Endothelial cell of umbilical vein (primary cell): ENCODE measurements at regions of chr10 and their contacts with region 1.

Region 1: GRCh38 chr10:97869091-97870042 is 19.7 kb downstream of the GOLGA7B start:
- DNase-seq: peak; percentile 78
- H3K4me3 ChIP-seq: no peak overlapping the region
- H3K27ac ChIP-seq: no peak overlapping the region
- H3K4me1 ChIP-seq: peaks cover 5% of the 10 kb centered on the region
- H3K27me3 ChIP-seq: peaks cover 13 to 15% of the 10 kb centered on the region in 2 experiments
- CTCF ChIP-seq: peak; percentile 73 to 75
- POLR2A ChIP-seq: peak; percentile 38

Region 2: GRCh38 chr10:97759158-97759887 is 110.0 kb before region 1 on chr10:
- CTCF ChIA-PET with region 1: interaction called, 13 read pairs
- POLR2A ChIA-PET with region 1: no interaction called
- dilution Hi-C with region 1: no loop called
- intact Hi-C with region 1: loop called (anchors 1 kb)
- DNase-seq: peak; percentile 62
- H3K4me3 ChIP-seq: no peak overlapping the region
- H3K27ac ChIP-seq: no peak overlapping the region
- H3K4me1 ChIP-seq: no peaks in the 10 kb centered on the region
- H3K27me3 ChIP-seq: no peaks in the 10 kb centered on the region
- CTCF ChIP-seq: peak; percentile 90 to 99
- POLR2A ChIP-seq: no peak

Region 3: GRCh38 chr10:97888641-97889262 is 19.4 kb after region 1 on chr10:
- CTCF ChIA-PET with region 1: interaction called, 19 read pairs
- POLR2A ChIA-PET with region 1: no interaction called
- dilution Hi-C with region 1: no loop called
- intact Hi-C with region 1: no loop called
- DNase-seq: peak; percentile 54
- H3K4me3 ChIP-seq: no peak overlapping the region
- H3K27ac ChIP-seq: no peak overlapping the region
- H3K4me1 ChIP-seq: peaks cover 2% of the 10 kb centered on the region
- H3K27me3 ChIP-seq: no peaks in the 10 kb centered on the region
- CTCF ChIP-seq: peak; percentile 4 to 13
- POLR2A ChIP-seq: no peak

Region 4: GRCh38 chr10:98006266-98006665 is 136.9 kb after region 1 on chr10:
- CTCF ChIA-PET with region 1: no interaction called
- POLR2A ChIA-PET with region 1: no interaction called
- dilution Hi-C with region 1: no loop called
- intact Hi-C with region 1: no loop called
- DNase-seq: no peak
- H3K4me3 ChIP-seq: no peak overlapping the region
- H3K27ac ChIP-seq: no peak overlapping the region
- H3K4me1 ChIP-seq: no peaks in the 10 kb centered on the region
- H3K27me3 ChIP-seq: peaks cover 2% of the 10 kb centered on the region in 2 experiments
- CTCF ChIP-seq: no peak
- POLR2A ChIP-seq: no peak